Left cardiac atrium (tissue), 4 donors: ENCODE measurements at regions of chr5 and their contacts with region 1.

Region 1: GRCh38 chr5:56638061-56638621 is 177.2 kb upstream of the MAP3K1 start:
- DNase-seq: no peak
- ATAC-seq: no peak

Region 2: GRCh38 chr5:56791396-56791795 is 153.3 kb after region 1 on chr5:
- intact Hi-C with region 1: loop called in 1 of 2 experiments (anchors 10 kb)
- DNase-seq: no peak
- ATAC-seq: no peak